ENCODE measurements at regions of chr14 and their contacts with region 1.

Region 1: GRCh38 chr14:73311708-73312030 is 74.4 kb downstream of the PAPLN start:
- DNase-seq: no peak
- H3K4me3 Mint-ChIP-seq: no peak overlapping the region
- H3K27ac Mint-ChIP-seq: peak overlapping the region; percentile 62
- H3K4me1 Mint-ChIP-seq: no peaks in the 10 kb centered on the region
- H3K27me3 Mint-ChIP-seq: no peaks in the 10 kb centered on the region
- CTCF ChIP-seq: no peak

Region 2: DNA sequence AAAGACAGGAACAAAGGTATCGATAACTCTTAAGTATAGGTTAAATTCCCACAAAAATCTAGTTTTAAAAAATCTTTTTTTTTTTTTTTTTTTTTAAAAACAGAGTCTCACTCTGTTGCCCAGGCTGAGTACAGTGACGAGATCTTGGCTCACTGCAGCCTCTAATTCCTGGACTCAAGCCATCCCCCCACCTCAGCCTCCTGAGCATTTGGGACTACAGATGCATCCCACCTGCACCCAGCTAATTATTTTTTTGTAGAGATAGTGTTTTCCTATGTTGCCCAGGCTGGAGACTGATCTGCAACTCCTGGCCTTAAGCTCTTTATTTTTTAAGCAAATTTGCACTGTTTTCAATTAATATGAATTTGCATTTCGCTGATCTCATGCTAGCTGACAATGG is 165.6 kb before region 1 on chr14:
- CTCF ChIA-PET with region 1: interaction called, 11 read pairs
- intact Hi-C with region 1: no loop called
- DNase-seq: no peak
- H3K4me3 Mint-ChIP-seq: no peak overlapping the region
- H3K27ac Mint-ChIP-seq: no peak overlapping the region
- H3K4me1 Mint-ChIP-seq: no peaks in the 10 kb centered on the region
- H3K27me3 Mint-ChIP-seq: no peaks in the 10 kb centered on the region
- CTCF ChIP-seq: no peak

Region 3: GRCh38 chr14:73503648-73504047 is 192.0 kb after region 1 on chr14:
- CTCF ChIA-PET with region 1: no interaction called
- intact Hi-C with region 1: no loop called
- DNase-seq: no peak
- H3K4me3 Mint-ChIP-seq: no peak overlapping the region
- H3K27ac Mint-ChIP-seq: no peak overlapping the region
- H3K4me1 Mint-ChIP-seq: no peaks in the 10 kb centered on the region
- H3K27me3 Mint-ChIP-seq: no peaks in the 10 kb centered on the region
- CTCF ChIP-seq: no peak